ENCODE measurements at regions of chrX and their contacts with region 1.

Region 1: DNA sequence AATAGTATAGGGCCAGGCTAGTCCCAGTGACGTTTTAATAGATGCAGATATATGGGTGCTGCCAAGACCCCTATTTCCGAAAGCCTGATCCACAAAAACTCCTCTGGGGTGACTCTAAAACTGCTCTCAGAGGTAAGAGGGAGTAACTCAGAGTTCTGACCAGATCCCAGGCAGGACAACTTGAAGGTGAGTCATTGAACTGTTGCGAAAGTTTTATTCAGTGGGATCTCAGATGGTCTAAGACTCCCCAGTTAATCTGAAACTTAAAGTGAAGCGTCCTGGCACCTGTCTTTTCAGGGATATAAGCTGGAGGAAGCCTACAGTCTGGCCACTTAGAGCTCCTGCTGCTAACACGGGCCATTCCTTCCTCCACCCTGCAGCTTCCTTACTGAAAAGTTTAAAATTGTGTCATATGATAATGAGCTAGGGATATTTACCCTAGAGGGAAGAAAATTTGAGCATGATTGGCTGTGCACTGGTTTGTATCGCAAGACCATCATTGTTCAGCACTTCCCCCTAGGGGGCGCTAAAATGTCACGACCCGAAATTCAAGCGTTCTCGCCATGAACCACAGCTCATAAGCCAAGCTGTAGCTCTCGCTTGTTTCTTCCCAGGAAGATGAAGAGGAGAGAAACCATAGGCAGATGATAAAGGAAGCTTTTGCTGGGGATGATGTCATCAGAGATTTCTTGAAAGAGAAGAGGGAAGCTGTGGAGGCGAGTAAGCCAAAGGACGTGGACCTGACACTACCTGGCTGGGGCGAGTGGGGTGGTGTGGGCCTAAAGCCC is 19.5 kb downstream of the UTP14A start:
- DNase-seq: peak; percentile 40 to 74
- ATAC-seq: peak; percentile 71 to 88 (median 82)
- H3K4me3 ChIP-seq: no peak overlapping the region
- H3K27ac ChIP-seq: no peak overlapping the region
- H3K4me1 ChIP-seq: no peaks in the 10 kb centered on the region
- H3K27me3 ChIP-seq: no peaks in the 10 kb centered on the region
- CTCF ChIP-seq: peak; percentile 44 to 73 (median 67)

Region 2: DNA sequence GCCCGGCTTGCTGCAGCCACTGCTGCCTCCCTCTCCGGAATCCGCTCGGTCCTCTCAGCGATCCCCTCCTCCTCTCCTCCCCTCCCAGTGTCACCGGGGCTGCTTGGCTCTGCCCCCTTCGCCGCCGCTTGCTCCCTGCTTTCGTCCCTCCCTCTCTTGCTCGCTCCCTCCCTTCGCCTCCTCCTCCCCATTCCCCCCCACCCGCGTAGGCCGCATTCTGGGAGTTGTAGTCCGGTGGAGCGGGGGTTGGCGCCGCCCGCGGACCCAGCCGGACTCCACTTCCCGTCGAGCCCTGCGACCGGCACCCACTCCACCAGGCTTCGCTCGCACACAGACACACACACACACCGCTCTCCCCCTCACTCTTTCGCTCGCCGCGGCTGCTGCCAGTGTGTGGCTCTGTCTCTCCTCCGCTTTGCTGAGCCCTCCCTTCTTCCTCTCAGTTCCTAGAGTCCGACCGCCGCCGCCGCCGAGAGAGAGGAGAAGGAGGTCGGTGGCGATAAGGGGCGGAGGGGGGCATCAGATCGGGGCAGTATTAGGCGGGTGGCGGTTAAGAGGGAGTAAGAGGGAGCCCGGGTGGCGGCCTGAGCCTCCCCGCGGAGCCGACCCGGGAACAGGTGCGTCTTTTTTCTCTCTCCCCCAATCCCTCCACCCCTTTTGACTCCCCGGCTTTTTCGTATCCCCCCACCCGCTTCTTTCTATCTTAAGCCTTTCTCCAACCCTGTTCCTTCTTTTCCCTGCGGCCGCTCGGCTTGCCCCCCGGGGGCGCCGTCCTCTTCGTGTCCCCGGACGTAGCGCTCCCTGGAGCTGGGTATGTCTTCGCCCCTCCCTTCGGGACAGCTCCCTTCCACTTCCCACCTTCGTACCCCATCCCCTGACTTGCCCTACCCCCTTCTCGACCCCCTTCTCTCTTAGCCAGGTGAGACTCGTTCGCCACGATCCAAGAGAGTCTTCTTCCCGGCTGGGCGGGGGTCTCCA is 57.1 kb after region 1 on chrX and contains the start of gene BCORL1:
- intact Hi-C with region 1: loop called in 2 of 10 experiments (anchors 2 to 10 kb)
- DNase-seq: peak; percentile 88 to 90
- ATAC-seq: peak; percentile 89 to 97 (median 96)
- H3K4me3 ChIP-seq: peak within 1 kb of the TSS in 1 of 10 donors; percentile 58
- H3K27ac ChIP-seq: peak within 1 kb of the TSS in 9 of 10 donors; percentile 30 to 77 (median 65)
- H3K4me1 ChIP-seq: peaks cover 0 to 8% (median 0%) of the 10 kb centered on the region in 9 donors
- H3K27me3 ChIP-seq: no peaks in the 10 kb centered on the region
- CTCF ChIP-seq: no peak
- total RNA-seq, gene BCORL1: 4.9 to 12.8 (median 8.3) TPM

Region 3: GRCh38 chrX:130024127-130024526 is 98.6 kb after region 1 on chrX:
- intact Hi-C with region 1: loop called in 8 of 10 experiments (anchors 2 to 10 kb)
- DNase-seq: peak; percentile 75 to 79
- ATAC-seq: peak; percentile 86 to 98 (median 95)
- H3K4me3 ChIP-seq: no peak overlapping the region
- H3K27ac ChIP-seq: peak overlapping the region in 2 of 10 donors; percentile 46 to 54
- H3K4me1 ChIP-seq: peaks cover 0 to 28% (median 7%) of the 10 kb centered on the region in 9 donors
- H3K27me3 ChIP-seq: no peaks in the 10 kb centered on the region
- CTCF ChIP-seq: no peak

Region 4: DNA sequence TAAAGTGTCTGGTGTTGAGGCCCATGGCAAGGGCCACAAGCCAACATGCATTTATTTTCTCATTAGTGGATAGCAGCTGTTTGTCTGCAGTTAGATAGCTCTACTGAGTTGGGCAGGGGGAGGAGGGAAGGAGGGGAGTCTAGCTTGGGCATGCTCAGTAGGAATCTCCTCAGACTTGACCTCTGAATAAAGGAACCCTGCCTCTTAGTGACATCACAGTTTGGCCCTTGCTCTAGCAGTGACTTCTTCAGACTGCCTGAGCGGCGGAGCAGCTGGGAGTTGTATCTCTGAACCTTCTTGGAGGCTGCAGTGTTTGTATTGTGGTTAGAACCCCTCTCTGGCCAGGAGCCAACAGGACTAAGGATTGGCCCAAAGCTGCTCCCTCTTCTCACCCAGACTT is 114.3 kb after region 1 on chrX:
- intact Hi-C with region 1: loop called in 1 of 10 experiments (anchors 10 kb)
- DNase-seq: peak in 1 of 2 donors; percentile 25
- ATAC-seq: peak in 6 of 8 donors; percentile 22 to 81 (median 48)
- H3K4me3 ChIP-seq: no peak overlapping the region
- H3K27ac ChIP-seq: no peak overlapping the region
- H3K4me1 ChIP-seq: no peaks in the 10 kb centered on the region
- H3K27me3 ChIP-seq: no peaks in the 10 kb centered on the region
- CTCF ChIP-seq: no peak

Region 5: GRCh38 chrX:130055103-130055502 is 129.6 kb after region 1 on chrX:
- intact Hi-C with region 1: loop called in 9 of 10 experiments (anchors 1 to 10 kb)
- DNase-seq: no peak
- ATAC-seq: peak in 5 of 8 donors; percentile 28 to 50 (median 34)
- H3K4me3 ChIP-seq: no peak overlapping the region
- H3K27ac ChIP-seq: no peak overlapping the region
- H3K4me1 ChIP-seq: peaks cover 0 to 6% (median 0%) of the 10 kb centered on the region in 9 donors
- H3K27me3 ChIP-seq: no peaks in the 10 kb centered on the region
- CTCF ChIP-seq: no peak

Region 6: DNA sequence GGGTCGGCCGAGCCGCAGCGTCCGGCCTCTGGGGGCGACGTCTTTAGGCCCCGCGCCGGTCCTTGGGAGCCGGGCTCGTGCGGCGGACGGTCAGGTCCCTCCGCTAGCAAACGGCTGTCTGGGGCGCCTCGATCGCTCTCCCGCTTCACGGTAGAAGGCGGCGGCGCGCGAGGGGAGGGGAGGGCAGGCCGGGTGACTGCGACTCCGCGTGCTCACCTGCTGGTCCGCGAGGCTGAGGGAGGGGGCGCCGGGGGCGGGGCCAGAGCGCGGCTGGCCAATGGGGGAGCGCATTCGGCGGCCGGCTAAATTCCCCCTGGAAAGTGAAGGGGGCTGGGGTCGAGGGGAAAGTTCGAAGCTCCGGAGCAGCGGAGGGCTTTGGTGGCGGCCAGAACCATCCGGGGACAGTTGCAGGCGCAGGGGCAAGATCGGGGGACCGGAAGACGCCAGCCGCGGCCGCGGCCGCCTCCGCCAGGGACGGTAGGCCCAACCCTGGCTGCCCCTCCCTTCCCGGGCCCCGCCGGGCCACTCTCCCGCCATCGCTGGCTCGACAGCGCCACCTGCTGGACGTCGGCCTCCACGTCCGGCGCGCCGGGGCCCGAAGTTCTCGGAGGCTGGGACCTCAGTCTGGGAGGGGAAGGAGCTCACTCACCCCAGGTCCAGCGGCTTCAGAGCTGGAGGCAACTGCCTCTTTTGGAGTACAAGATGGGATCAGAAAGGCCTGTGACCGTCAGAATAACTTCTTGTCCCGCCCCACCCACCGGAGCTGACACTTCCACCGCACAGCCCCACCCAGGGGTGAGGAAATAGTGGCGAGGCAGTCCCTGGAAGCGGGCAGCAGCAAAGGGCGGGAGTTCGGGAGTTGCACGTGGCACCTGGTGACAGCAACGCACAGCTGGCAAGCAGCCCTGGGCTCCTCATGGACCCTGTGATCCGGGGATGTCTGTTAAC is 134.9 kb after region 1 on chrX:
- intact Hi-C with region 1: loop called in 9 of 10 experiments (anchors 1 to 10 kb)
- DNase-seq: peak; percentile 69 to 86
- ATAC-seq: peak; percentile 91 to 97 (median 94)
- H3K4me3 ChIP-seq: peak overlapping the region; percentile 28 to 64 (median 57)
- H3K27ac ChIP-seq: peak overlapping the region in 8 of 10 donors; percentile 25 to 69 (median 58)
- H3K4me1 ChIP-seq: peaks cover 0 to 12% (median 3%) of the 10 kb centered on the region in 9 donors
- H3K27me3 ChIP-seq: no peaks in the 10 kb centered on the region
- CTCF ChIP-seq: peak; percentile 67 to 90 (median 85)

Region 7: DNA sequence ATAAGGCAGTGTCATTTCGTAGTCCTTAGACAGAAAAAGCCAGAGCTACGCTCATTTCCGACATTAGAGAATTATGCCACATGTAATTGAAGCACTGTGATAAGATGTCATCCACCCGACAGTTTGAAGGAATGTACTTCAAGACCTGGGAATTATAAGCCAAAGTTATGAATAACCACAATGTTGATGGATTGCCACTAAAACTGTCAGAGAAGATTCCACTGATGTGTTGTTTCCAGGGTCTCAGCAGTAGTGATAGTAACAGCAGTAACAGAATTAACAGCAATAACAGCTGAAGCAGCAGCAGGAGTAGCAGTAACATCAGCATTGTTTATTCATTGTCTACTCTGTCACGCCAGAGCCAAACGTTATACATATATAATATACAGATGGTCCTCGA is 271.0 kb after region 1 on chrX:
- intact Hi-C with region 1: loop called in 2 of 10 experiments (anchors 10 kb)
- DNase-seq: no peak
- ATAC-seq: no peak
- H3K4me3 ChIP-seq: no peak overlapping the region
- H3K27ac ChIP-seq: no peak overlapping the region
- H3K4me1 ChIP-seq: no peaks in the 10 kb centered on the region
- H3K27me3 ChIP-seq: no peaks in the 10 kb centered on the region
- CTCF ChIP-seq: no peak

Region 8: GRCh38 chrX:130878350-130879341 is 953.1 kb after region 1 on chrX:
- intact Hi-C with region 1: no loop called
- DNase-seq: no peak
- ATAC-seq: peak in 2 of 8 donors; percentile 49 to 52
- H3K4me3 ChIP-seq: no peak overlapping the region
- H3K27ac ChIP-seq: peak overlapping the region in 1 of 10 donors; percentile 11
- H3K4me1 ChIP-seq: peaks cover 0 to 27% (median 3%) of the 10 kb centered on the region in 9 donors
- H3K27me3 ChIP-seq: peaks cover 0 to 27% (median 0%) of the 10 kb centered on the region in 7 donors
- CTCF ChIP-seq: no peak